Natural killer cell (primary cell): ENCODE measurements at regions of chr10 and their contacts with region 1.

Region 1: DNA sequence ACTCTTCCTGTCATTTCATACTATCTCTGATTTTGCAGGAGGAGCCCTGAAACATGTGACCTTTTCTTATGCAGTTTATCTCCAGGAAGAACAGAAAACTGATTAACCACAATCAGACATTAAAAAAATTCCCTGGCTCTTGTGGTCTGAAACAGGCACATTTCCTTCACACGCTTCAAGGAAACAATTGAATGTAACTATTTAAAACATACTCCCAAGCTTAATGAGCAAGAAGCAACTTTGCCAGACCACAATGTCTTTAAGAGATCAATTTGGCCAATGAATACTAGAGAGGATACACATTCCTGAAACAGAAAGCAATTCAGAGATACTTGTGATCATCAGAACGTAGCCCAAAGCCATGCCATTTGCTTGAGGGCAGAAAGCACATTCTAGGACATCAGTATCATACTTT is 65.8 kb downstream of the PIP4K2A start:
- DNase-seq: peak in 1 of 2 donors; percentile 56
- ATAC-seq: no peak
- H3K4me3 ChIP-seq: no peak overlapping the region
- H3K4me3 Mint-ChIP-seq: peak overlapping the region; percentile 86
- H3K27ac ChIP-seq: peak overlapping the region; percentile 91
- H3K27ac Mint-ChIP-seq: peak overlapping the region; percentile 97 to 99
- H3K4me1 ChIP-seq: peaks cover 86% of the 10 kb centered on the region
- H3K4me1 Mint-ChIP-seq: peaks cover 91 to 94% of the 10 kb centered on the region in 2 donors
- H3K27me3 ChIP-seq: no peaks in the 10 kb centered on the region
- H3K27me3 Mint-ChIP-seq: no peaks in the 10 kb centered on the region
- CTCF ChIP-seq: no peak

Region 2: GRCh38 chr10:22597138-22597537 is 51.4 kb before region 1 on chr10:
- intact Hi-C with region 1: loop called (anchors 2 kb)
- DNase-seq: peak; percentile 61 to 79
- ATAC-seq: peak; percentile 89 to 98 (median 97)
- H3K4me3 ChIP-seq: no peak overlapping the region
- H3K4me3 Mint-ChIP-seq: peak overlapping the region; percentile 85
- H3K27ac ChIP-seq: peak overlapping the region; percentile 79
- H3K27ac Mint-ChIP-seq: peak overlapping the region; percentile 99
- H3K4me1 ChIP-seq: peaks cover 76% of the 10 kb centered on the region
- H3K4me1 Mint-ChIP-seq: peaks cover 82 to 84% of the 10 kb centered on the region in 2 donors
- H3K27me3 ChIP-seq: no peaks in the 10 kb centered on the region
- H3K27me3 Mint-ChIP-seq: no peaks in the 10 kb centered on the region
- CTCF ChIP-seq: no peak

Region 3: GRCh38 chr10:22615819-22616499 is 32.6 kb before region 1 on chr10:
- intact Hi-C with region 1: no loop called
- DNase-seq: peak in 1 of 2 donors; percentile 77
- ATAC-seq: peak; percentile 20 to 71 (median 48)
- H3K4me3 ChIP-seq: no peak overlapping the region
- H3K4me3 Mint-ChIP-seq: peak overlapping the region; percentile 92
- H3K27ac ChIP-seq: peak overlapping the region; percentile 79
- H3K27ac Mint-ChIP-seq: peak overlapping the region; percentile 99
- H3K4me1 ChIP-seq: peaks cover 73% of the 10 kb centered on the region
- H3K4me1 Mint-ChIP-seq: peaks cover 91 to 94% of the 10 kb centered on the region in 2 donors
- H3K27me3 ChIP-seq: no peaks in the 10 kb centered on the region
- H3K27me3 Mint-ChIP-seq: no peaks in the 10 kb centered on the region
- CTCF ChIP-seq: no peak

Region 4: GRCh38 chr10:22635650-22636049 is 12.9 kb before region 1 on chr10:
- intact Hi-C with region 1: loop called (anchors 1 kb)
- DNase-seq: no peak
- ATAC-seq: no peak
- H3K4me3 ChIP-seq: no peak overlapping the region
- H3K4me3 Mint-ChIP-seq: peak overlapping the region; percentile 90
- H3K27ac ChIP-seq: peak overlapping the region; percentile 97
- H3K27ac Mint-ChIP-seq: peak overlapping the region; percentile 99
- H3K4me1 ChIP-seq: peaks cover 72% of the 10 kb centered on the region
- H3K4me1 Mint-ChIP-seq: peaks cover 90 to 93% of the 10 kb centered on the region in 2 donors
- H3K27me3 ChIP-seq: no peaks in the 10 kb centered on the region
- H3K27me3 Mint-ChIP-seq: no peaks in the 10 kb centered on the region
- CTCF ChIP-seq: no peak

Region 5: DNA sequence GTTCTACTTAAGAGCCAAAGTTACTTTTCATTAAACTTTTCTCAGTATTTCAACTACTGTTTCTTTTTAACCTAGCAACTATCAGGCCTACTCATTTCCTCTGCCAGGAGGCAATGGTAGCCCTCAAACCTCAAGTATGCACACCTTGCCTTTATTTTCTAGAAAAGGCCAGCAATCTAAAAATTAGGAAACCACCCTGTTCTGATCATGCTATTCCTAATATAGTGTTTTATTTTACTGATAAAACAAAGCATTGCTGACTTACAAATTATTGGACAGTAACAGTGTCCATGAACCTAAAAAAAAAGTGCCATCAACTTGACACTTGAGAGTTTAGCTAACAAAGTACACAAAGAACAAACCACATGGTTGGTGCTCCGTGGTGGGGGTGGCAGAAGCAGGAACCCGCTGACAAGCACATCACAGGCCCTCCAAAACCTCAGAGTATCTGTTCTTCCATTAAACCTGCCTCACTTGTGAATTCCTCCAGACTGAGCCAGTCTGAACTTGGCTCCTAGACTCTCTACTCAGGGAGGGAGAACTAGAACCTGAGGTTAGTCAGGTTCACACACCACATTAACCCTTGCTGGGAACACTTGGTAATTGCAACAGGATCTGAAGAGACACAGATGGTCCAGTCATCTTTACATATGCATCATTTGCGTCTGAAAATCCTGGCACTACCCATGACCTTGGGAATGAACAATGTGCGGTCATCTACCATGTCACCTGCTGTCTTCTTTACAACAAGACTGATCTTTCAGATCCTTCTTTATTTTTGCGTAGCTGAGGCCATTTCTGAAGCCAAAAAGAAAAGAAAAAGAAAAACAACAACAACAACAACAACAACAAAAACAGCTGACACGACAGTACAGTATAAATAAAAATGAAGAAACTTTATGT is 33.9 kb after region 1 on chr10:
- intact Hi-C with region 1: loop called (anchors 2 kb)
- DNase-seq: peak; percentile 62 to 84
- ATAC-seq: peak; percentile 46 to 76 (median 71)
- H3K4me3 ChIP-seq: no peak overlapping the region
- H3K4me3 Mint-ChIP-seq: peak overlapping the region; percentile 85
- H3K27ac ChIP-seq: peak overlapping the region; percentile 94
- H3K27ac Mint-ChIP-seq: peak overlapping the region; percentile 92 to 99
- H3K4me1 ChIP-seq: peaks cover 63% of the 10 kb centered on the region
- H3K4me1 Mint-ChIP-seq: peaks cover 86 to 90% of the 10 kb centered on the region in 2 donors
- H3K27me3 ChIP-seq: no peaks in the 10 kb centered on the region
- H3K27me3 Mint-ChIP-seq: no peaks in the 10 kb centered on the region
- CTCF ChIP-seq: no peak

Region 6: GRCh38 chr10:22988581-22989360 is 340.2 kb after region 1 on chr10:
- intact Hi-C with region 1: loop called (anchors 10 kb)
- DNase-seq: peak; percentile 48 to 89
- ATAC-seq: peak; percentile 87 to 95 (median 90)
- H3K4me3 ChIP-seq: no peak overlapping the region
- H3K4me3 Mint-ChIP-seq: no peak overlapping the region
- H3K27ac ChIP-seq: no peak overlapping the region
- H3K27ac Mint-ChIP-seq: no peak overlapping the region
- H3K4me1 ChIP-seq: no peaks in the 10 kb centered on the region
- H3K4me1 Mint-ChIP-seq: peaks cover 4 to 6% of the 10 kb centered on the region in 2 donors
- H3K27me3 ChIP-seq: no peaks in the 10 kb centered on the region
- H3K27me3 Mint-ChIP-seq: peaks cover 11 to 16% of the 10 kb centered on the region in 2 donors
- CTCF ChIP-seq: peak; percentile 90